ENCODE measurements at regions of chr22 and their contacts with region 1.

Region 1: DNA sequence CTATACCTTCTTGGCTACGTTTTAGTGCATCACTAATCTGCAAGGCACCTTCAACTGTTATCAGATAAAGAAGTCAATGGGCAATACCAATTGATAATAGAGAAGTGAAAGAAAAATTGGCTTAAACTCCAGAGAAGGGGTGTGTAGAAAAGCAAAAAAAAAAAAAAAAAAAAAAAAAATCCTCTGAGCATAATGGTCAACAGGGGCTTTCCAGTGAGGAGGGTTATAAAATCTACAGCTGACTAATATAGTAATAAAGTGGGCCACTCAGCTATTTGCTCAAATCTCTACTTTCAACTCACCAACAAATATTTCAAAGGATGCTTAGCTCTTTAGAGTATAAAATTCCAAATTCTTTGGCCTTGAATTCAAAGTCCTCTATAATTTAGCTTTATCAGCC is 77.8 kb downstream of the APOL5 start:
- DNase-seq: peak; percentile 20
- ATAC-seq: peak; percentile 38; the same call in 1 of the 2 replicates
- H3K4me3 ChIP-seq: no peak overlapping the region
- H3K27ac ChIP-seq: peak overlapping the region; percentile 32; the same call in 1 of the 2 replicates
- H3K4me1 ChIP-seq: peaks cover 5% of the 10 kb centered on the region; the same call in 1 of the 2 replicates
- H3K27me3 ChIP-seq: no peaks in the 10 kb centered on the region
- CTCF ChIP-seq: no peak

Region 2: DNA sequence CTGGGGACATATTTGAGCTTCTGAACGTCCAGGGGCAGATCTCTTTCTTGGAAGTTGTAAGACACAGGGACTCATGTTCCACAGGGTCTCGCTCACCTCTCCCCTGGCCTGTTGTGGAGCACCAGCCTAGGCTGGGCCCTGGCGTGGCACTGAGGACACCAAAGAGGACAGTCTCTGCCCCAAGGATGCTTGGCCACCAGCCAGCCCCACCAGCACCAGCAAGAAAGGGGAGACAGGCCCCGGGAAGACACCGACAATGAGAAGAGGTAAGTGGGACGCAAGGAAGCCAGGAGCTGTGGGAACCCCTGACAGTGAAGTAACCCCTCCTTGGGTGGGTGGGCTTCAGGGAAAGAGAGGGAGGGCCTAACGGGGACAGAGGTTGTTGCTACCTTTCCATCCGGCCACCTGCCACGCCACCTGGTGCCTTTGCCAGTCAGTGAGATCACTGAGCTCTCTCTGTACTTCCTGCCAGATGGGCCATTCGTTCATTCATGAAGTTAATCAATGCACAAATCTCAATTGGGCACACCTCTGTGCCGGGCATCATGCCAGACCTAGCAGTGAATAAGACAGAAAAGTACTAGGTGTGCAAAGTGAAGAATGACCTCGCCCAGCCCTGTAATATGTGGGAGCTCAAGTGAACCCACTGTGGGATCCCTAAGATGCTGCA is 66.7 kb before region 1 on chr22:
- CTCF ChIA-PET with region 1: no interaction called
- POLR2A ChIA-PET with region 1: no interaction called
- intact Hi-C with region 1: no loop called
- DNase-seq: peak; percentile 15
- ATAC-seq: no peak
- H3K4me3 ChIP-seq: no peak overlapping the region
- H3K27ac ChIP-seq: no peak overlapping the region
- H3K4me1 ChIP-seq: no peaks in the 10 kb centered on the region
- H3K27me3 ChIP-seq: no peaks in the 10 kb centered on the region
- CTCF ChIP-seq: 0 out of 2 replicates have a peak, but pooled peaks have one; percentile 9

Region 3: GRCh38 chr22:35872451-35872850 is 77.0 kb after region 1 on chr22:
- CTCF ChIA-PET with region 1: no interaction called
- POLR2A ChIA-PET with region 1: no interaction called
- intact Hi-C with region 1: no loop called
- DNase-seq: no peak
- ATAC-seq: no peak
- H3K4me3 ChIP-seq: no peak overlapping the region
- H3K27ac ChIP-seq: no peak overlapping the region
- H3K4me1 ChIP-seq: no peaks in the 10 kb centered on the region
- H3K27me3 ChIP-seq: no peaks in the 10 kb centered on the region
- CTCF ChIP-seq: no peak

Region 4: GRCh38 chr22:35914665-35915476 is 119.4 kb after region 1 on chr22:
- CTCF ChIA-PET with region 1: no interaction called
- POLR2A ChIA-PET with region 1: interaction called, 23 read pairs
- intact Hi-C with region 1: no loop called
- DNase-seq: peak; percentile 89
- ATAC-seq: peak; percentile 87
- H3K4me3 ChIP-seq: peak overlapping the region; percentile 67
- H3K27ac ChIP-seq: peak overlapping the region; percentile 64
- H3K4me1 ChIP-seq: peaks cover 31% of the 10 kb centered on the region
- H3K27me3 ChIP-seq: no peaks in the 10 kb centered on the region
- CTCF ChIP-seq: no peak

Measured in PC-3 (cell line).